GM12878 (cell line): ENCODE measurements at regions of chr21 and their contacts with region 1.

Region 1: GRCh38 chr21:34113842-34114241 is 40.5 kb downstream of the MRPS6 start:
- DNase-seq: no peak
- ATAC-seq: no peak
- H3K4me3 ChIP-seq: no peak overlapping the region
- H3K27ac ChIP-seq: no peak overlapping the region
- H3K4me1 ChIP-seq: no peaks in the 10 kb centered on the region
- H3K27me3 ChIP-seq: no peaks in the 10 kb centered on the region
- CTCF ChIP-seq: no peak
- EP300 ChIP-seq: no peak
- POLR2A ChIP-seq: no peak
- RAD21 ChIP-seq: no peak

Region 2: DNA sequence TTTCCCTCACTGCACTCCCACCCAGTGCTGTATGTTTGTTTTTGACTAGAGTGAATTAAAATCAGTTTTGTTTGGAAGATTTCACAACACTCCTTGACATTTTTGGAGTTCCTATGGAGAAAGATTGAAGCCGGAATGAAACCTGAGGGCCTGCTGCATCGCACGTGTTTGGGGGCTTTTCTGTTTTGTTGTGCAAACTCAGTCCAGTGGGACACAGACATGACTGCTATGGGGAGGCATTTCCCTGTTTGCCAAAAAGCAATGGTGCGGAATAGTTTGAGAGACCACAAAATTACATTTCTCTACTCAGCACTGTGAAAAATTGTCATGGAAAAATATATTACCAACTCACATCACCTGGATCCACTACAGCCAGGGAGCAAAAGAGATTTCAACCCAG is 206.2 kb after region 1 on chr21:
- CTCF ChIA-PET with region 1: no interaction called
- POLR2A ChIA-PET with region 1: no interaction called
- RAD21 ChIA-PET with region 1: no interaction called
- SMC1A ChIA-PET with region 1: no interaction called
- in situ Hi-C with region 1: no loop called
- intact Hi-C with region 1: loop called (anchors 10 kb)
- DNase-seq: no peak
- ATAC-seq: no peak
- H3K4me3 ChIP-seq: no peak overlapping the region
- H3K27ac ChIP-seq: no peak overlapping the region
- H3K4me1 ChIP-seq: no peaks in the 10 kb centered on the region
- H3K27me3 ChIP-seq: no peaks in the 10 kb centered on the region
- CTCF ChIP-seq: no peak
- EP300 ChIP-seq: no peak
- POLR2A ChIP-seq: no peak
- RAD21 ChIP-seq: no peak